ENCODE measurements at regions of chr10 and their contacts with region 1.

Region 1: DNA sequence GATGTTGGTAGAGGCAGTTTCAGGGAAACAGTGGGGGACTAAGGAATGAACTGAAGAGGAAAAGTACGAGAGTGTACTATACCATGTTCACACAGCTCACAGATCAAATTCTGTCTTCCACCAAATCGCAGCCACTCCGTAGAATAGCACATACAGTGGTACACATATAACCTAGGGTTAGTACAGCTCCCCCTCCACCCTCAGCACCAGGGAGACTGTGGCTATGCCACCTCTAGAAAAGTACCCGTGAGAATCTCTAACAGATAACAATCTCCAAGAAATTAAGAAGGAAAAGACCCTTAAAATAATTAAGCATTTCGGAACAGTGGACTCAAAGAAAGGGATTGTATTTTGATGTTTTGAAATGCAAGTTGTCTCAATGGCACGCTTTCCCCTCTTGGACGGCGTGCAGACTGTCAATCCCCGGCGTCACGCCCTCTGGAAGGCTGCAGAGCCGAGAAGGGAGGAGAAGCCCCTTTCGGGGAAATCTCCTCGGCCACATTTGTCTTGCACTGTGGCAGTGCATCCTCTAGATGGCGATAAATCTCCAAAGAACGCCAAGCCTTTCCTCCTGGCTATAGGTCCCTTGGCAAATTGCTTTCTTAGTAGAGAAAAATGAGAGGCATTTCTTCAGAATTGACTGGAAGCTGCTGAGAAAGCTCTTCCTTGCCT is 345.0 kb downstream of the REEP3 start:
- H3K4me3 ChIP-seq: peak overlapping the region; percentile 3; the same call in 1 of the 2 replicates
- H3K27ac ChIP-seq: no peak overlapping the region
- H3K4me1 ChIP-seq: no peaks in the 10 kb centered on the region
- CTCF ChIP-seq: peak; percentile 63

Region 2: DNA sequence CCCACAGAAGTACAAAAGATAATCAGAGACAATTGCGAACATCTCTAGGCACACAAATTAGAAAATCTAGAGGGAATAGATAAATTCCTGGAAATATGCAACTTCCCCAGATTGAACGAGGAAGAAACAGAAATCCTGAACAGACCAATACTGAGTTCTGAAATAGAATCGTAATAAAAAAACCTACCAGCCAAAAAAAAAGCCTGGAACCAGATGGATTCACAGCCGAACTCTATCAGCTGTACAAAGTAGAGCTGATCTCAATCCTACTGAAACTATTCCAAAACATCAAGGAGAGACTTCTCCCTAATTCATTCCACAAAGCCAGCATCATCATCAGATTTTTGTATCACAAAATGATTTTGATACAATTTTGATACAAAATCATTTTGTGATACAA is 138.6 kb before region 1 on chr10:
- CTCF ChIA-PET with region 1: no interaction called
- POLR2A ChIA-PET with region 1: no interaction called
- H3K4me3 ChIP-seq: no peak overlapping the region
- H3K27ac ChIP-seq: no peak overlapping the region
- H3K4me1 ChIP-seq: no peaks in the 10 kb centered on the region
- CTCF ChIP-seq: no peak

Region 3: GRCh38 chr10:63843108-63843507 is 23.1 kb before region 1 on chr10:
- CTCF ChIA-PET with region 1: interaction called, 17 read pairs
- POLR2A ChIA-PET with region 1: no interaction called
- H3K4me3 ChIP-seq: no peak overlapping the region
- H3K27ac ChIP-seq: no peak overlapping the region
- H3K4me1 ChIP-seq: no peaks in the 10 kb centered on the region
- CTCF ChIP-seq: no peak

Region 4: DNA sequence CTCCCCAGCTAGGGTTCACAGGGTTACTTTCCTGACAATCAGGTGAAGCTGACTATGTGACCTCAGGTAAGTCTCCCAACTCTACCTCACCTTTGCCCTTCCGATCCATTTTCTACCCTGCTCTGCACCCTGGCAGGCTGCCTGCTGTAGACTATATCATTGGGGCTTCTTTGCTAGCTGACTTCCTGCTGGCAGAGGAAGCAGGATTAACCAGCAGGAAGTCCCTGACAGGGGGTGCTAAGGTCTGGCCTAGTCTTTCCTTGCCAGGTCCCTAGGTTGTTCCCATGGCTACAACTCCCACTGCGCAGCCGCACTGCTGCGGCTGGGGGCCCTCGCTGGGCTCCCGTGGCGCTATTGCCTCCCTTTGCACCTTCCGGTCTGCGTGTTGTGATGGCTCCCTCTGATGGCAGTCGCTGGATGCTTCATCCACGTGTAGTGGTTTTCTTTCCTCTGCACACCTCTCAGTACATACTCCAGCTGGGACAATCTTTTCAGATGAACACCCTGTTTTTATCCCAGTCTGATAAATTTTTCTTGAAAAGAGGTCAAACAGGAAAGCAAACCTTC is 20.9 kb after region 1 on chr10:
- CTCF ChIA-PET with region 1: interaction called, 12 read pairs
- POLR2A ChIA-PET with region 1: no interaction called
- H3K4me3 ChIP-seq: no peak overlapping the region
- H3K27ac ChIP-seq: no peak overlapping the region
- H3K4me1 ChIP-seq: no peaks in the 10 kb centered on the region
- CTCF ChIP-seq: no peak

Region 5: DNA sequence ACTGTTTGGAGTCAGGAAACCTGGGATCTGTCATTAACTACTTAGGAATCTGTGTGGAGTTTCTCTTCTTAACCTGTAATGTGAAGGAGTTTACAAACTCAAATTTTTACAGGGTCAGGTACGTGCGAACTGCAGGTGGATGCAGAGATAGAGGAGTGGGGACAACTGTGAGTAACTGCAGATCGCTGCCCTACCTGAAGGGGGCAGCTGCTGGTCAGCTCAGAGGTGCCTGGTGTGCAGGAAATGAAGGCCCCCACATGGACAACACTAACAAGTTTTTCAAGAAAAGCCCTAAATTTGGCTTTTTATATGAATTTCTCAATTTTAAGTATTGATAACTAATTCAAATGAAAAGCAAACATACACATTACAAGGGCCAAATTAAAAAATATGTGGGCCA is 35.0 kb after region 1 on chr10:
- CTCF ChIA-PET with region 1: interaction called, 11 read pairs
- POLR2A ChIA-PET with region 1: no interaction called
- H3K4me3 ChIP-seq: no peak overlapping the region
- H3K27ac ChIP-seq: no peak overlapping the region
- H3K4me1 ChIP-seq: no peaks in the 10 kb centered on the region
- CTCF ChIP-seq: no peak; the same call in 1 of the 2 replicates

Region 6: DNA sequence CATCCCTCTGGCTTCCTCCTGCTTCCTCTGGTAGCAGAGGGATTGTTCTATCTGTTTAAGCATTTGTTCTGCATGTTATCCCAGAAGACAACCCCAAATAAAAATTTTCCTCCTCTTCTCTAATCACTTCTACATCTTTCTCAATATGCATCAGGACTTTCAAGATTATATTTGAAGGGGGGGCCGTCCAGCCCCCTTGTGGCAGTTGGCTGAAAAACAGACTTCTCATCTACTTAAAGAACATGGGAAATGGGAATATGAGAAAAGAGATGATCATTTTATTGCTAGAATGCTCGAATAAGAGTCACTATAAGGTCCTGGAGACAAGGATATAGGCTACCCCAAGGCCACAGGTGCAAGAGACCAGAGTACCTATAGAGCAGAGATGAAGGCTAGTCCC is 121.0 kb after region 1 on chr10:
- CTCF ChIA-PET with region 1: interaction called, 10 read pairs
- POLR2A ChIA-PET with region 1: no interaction called
- H3K4me3 ChIP-seq: no peak overlapping the region
- H3K27ac ChIP-seq: no peak overlapping the region
- H3K4me1 ChIP-seq: no peaks in the 10 kb centered on the region
- CTCF ChIP-seq: no peak

Region 7: DNA sequence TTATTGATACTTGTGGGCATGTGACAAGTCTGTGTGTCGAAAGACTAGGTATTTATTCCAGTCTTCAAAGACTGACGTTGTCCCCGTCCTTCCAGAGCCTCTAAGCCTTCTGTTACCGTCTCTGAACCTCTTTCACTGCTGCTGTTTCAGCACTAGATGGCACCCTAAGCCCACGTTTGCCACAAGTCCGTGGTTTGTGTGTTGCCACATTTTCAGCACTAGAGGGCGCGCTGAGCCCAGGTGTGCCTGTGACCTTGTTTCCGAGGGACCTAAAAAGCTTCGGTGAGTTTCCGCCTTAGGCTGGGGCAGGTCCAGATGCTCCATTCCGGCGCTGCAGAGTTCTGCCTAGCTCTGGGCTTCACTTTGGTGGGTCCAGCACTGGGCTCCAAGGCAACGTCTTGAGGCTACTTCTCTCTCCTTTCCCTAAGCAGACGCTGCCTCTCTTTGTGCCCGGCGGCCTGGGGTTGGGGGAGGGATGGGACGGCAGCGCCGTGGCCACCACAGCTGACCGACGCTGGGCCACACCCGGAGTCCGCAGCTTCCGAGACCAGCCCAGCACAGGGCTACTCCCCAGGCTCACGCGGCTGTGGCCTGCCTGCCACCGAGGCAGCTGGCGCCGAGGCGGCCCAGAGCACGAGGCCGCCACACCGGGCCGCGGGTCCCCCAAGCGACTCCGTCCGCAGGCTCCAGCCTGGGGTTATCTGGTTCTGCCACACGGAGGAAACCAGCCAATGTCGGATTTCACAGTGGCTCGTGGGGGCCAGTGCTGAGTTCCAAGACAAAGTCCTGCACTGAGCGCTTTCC is 175.2 kb after region 1 on chr10:
- CTCF ChIA-PET with region 1: interaction called, 14 read pairs
- POLR2A ChIA-PET with region 1: no interaction called
- H3K4me3 ChIP-seq: peak overlapping the region; percentile 20
- H3K27ac ChIP-seq: no peak overlapping the region
- H3K4me1 ChIP-seq: no peaks in the 10 kb centered on the region
- CTCF ChIP-seq: peak; percentile 96

Measured in HEK293 (cell line).